ENCODE measurements at regions of chr17 and their contacts with region 1.

Region 1: GRCh38 chr17:6666077-6666521 is 14.5 kb downstream of the C17orf100 start:
- DNase-seq: peak; percentile 87 to 95
- H3K4me3 ChIP-seq: no peak overlapping the region
- H3K27ac ChIP-seq: no peak overlapping the region
- H3K4me1 ChIP-seq: no peaks in the 10 kb centered on the region
- H3K27me3 ChIP-seq: no peaks in the 10 kb centered on the region
- CTCF ChIP-seq: peak; percentile 59 to 86 (median 72)
- POLR2A ChIP-seq: no peak

Region 2: DNA sequence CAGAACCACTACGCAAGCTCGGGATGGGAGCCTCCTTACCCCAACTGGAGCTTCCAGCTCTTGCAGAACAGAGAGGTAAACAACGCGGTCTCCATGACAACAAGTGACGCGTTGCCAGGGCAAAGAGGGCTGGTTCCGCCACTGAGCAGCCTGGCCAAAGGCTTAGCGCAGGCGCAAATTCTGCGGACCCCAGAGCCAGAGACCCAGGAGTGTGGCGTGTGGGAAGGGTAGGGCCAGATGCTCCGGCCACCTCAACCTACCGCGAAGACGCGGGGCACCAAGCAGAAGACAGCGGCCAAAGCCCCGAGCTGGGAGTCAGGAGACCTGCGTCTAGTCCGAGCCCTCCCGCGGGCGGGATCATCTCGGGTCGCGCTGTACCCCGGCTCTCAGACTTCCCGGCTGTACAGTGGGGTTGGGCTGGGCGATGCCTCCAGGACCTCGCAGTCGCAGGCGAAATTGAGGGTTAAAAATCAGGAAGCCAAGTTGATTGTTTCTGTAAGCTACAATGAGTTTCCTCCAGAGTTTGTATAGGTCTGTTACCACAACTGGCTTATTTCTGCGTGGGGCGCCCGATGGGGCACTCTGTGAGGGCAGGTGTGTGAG is 165.7 kb after region 1 on chr17 and contains the start of gene TEKT1:
- intact Hi-C with region 1: loop called (anchors 10 kb)
- DNase-seq: no peak
- H3K4me3 ChIP-seq: peak within 1 kb of the TSS in 1 of 2 donors; percentile 4
- H3K27ac ChIP-seq: no peak within 1 kb of the TSS
- H3K4me1 ChIP-seq: peaks cover 8% of the 10 kb centered on the region
- H3K27me3 ChIP-seq: no peaks in the 10 kb centered on the region
- CTCF ChIP-seq: no peak
- POLR2A ChIP-seq: no peak
- total RNA-seq, gene TEKT1: not detected